Activated CD4-positive, alpha-beta memory T cell treated with anti-CD3 and anti-CD28 coated beads for 36 hours (primary cell): ENCODE measurements at regions of chr11 and their contacts with region 1.

Region 1: GRCh38 chr11:46352063-46352841 is 5.0 kb downstream of the DGKZ start:
- DNase-seq: peak; percentile 86
- H3K4me3 Mint-ChIP-seq: peak overlapping the region; percentile 76
- H3K27ac Mint-ChIP-seq: peak overlapping the region; percentile 87
- H3K4me1 Mint-ChIP-seq: peaks cover 78% of the 10 kb centered on the region
- H3K27me3 Mint-ChIP-seq: no peaks in the 10 kb centered on the region

Region 2: DNA sequence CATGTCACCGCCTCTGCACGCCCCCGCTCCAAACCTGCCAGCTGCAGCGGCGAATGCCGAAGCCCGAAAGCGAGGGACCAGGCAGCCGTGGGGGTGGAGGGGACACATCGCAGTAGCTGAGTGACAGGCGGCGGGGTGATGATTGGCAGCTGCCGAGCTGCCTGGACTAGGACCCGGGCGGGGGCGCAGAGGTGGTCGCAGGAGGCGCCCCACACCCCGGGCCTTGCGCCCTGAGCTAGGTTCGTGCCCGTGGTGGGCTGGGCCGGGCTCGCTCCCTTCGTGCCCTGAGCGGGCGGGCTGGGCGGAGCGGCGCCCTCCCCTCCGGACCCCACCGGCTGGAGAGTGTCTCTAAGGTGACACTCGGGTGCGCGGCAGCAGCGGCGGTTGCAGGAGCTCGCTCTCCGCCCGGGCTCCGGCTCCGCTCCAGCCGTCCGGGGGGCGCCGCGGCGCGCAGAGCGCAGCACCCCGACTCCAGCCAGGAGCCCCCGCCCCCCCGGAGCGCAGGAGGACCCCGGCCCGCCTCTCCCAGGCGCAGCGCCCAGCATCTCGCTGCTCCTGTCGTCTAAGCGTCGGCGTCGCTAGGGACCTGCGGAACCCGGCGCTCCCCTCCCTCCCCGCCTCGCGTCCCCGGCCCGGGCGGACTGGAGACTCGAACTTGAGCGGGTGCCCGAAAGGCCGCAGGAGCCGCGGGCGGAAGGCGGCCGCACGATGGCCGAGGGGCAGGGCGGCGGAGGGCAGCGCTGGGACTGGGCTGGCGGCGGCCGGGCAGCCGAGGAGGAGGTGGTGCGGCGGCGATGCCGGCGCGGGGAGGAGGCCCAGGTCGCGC is 19.5 kb before region 1 on chr11:
- CTCF ChIA-PET with region 1: interaction called, 52 read pairs
- POLR2A ChIA-PET with region 1: interaction called, 6 read pairs
- intact Hi-C with region 1: no loop called
- DNase-seq: peak; percentile 64
- H3K4me3 Mint-ChIP-seq: peak overlapping the region; percentile 73
- H3K27ac Mint-ChIP-seq: peak overlapping the region; percentile 8
- H3K4me1 Mint-ChIP-seq: peaks cover 67% of the 10 kb centered on the region
- H3K27me3 Mint-ChIP-seq: no peaks in the 10 kb centered on the region

Region 3: GRCh38 chr11:46367244-46367915 is 15.1 kb after region 1 on chr11:
- CTCF ChIA-PET with region 1: interaction called, 346 read pairs
- POLR2A ChIA-PET with region 1: interaction called, 8 read pairs
- intact Hi-C with region 1: loop called (anchors 1 kb)
- DNase-seq: peak; percentile 84
- H3K4me3 Mint-ChIP-seq: no peak overlapping the region
- H3K27ac Mint-ChIP-seq: peak overlapping the region; percentile 67
- H3K4me1 Mint-ChIP-seq: peaks cover 38% of the 10 kb centered on the region
- H3K27me3 Mint-ChIP-seq: no peaks in the 10 kb centered on the region

Region 4: DNA sequence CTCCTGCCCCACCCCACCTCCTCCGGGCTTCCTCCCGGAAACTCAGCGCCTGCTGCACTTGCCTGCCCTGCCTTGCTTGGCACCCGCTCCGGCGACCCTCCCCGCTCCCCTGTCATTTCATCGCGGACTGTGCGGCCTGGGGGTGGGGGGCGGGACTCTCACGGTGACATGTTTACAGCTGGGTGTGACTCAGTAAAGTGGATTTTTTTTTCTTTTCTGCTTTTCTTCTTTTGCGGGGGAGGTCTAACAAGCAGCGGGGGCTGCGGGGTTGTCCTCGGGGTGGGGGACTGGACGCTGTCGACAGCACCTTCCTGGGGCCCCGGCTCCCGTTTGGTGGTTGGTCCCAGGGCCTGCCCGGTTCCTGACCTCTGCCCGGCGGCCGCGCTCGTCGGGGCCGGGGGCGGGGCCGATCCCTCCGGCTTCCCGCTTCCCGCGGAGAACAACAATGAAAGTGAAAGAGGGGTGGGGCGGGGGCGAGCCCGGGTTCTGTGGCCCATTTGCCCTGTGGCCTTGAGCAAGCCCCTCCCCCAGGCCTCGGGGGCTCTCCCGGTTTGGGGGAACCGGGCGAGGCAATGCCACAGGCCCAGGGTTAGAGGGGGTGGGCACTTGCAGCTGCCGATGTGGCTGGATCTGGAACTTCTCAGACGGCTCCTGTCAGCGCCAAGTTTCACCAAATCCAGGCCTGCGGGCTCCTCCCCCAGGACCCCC is 28.2 kb after region 1 on chr11:
- CTCF ChIA-PET with region 1: interaction called, 17 read pairs
- POLR2A ChIA-PET with region 1: interaction called, 3 read pairs
- intact Hi-C with region 1: loop called (anchors 1 kb)
- DNase-seq: peak; percentile 88
- H3K4me3 Mint-ChIP-seq: peak overlapping the region; percentile 74
- H3K27ac Mint-ChIP-seq: peak overlapping the region; percentile 45
- H3K4me1 Mint-ChIP-seq: peaks cover 7% of the 10 kb centered on the region
- H3K27me3 Mint-ChIP-seq: peaks cover 17% of the 10 kb centered on the region